A549 (cell line): ENCODE measurements at regions of chr3 and their contacts with region 1.

Region 1: GRCh38 chr3:39154280-39155021 is 1.1 kb upstream of the CSRNP1 start:
- DNase-seq: peak; percentile 87 to 91
- ATAC-seq: peak; percentile 48 to 74
- H3K4me3 ChIP-seq: peak overlapping the region; percentile 95
- H3K27ac ChIP-seq: peak overlapping the region; percentile 94 to 96
- H3K4me1 ChIP-seq: peaks cover 31% of the 10 kb centered on the region
- CTCF ChIP-seq: no peak
- EP300 ChIP-seq: no peak
- POLR2A ChIP-seq: peak; percentile 67
- RAD21 ChIP-seq: no peak

Region 2: DNA sequence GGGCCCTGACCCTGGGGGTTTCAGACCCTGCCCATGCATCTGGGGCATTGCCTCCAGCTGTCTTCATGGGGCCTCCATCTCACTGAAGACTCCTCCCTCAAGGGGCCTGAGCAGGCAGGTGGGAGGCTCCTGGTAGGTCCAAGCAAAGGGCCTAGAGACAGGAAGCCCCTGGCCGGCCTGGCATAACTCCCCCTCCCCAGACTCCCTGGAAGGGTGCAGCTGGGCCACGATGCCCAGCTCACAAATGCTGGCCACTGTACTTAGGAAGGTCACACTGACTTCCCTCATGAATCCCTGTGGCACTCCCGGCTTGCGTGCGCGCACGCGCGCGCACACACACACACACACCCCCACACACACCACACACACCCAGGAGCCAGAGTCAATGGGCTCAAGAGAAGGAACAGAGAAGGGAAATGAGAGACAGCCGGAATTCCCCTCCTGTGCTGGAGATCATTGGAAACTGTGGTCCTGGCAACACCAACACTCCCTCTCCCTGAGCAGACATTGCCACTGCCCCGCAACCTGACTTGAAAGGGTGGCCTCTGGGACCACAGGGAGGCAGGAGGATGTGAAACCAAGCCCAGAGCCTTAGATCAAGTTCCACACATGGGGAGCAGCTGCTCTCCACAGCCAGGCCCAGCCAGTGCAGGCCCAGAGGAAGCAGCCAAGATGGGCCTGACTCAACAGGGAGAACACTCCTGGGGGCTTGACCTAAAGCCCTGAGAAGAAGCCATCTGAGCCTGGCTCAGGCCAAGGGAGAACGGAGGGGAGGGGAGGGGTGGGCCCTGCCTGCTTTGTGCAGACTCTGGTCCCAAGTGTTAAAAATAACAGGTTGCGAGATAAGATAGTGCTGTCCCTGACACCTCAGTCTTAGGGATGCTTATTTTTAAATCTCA is 574.7 kb before region 1 on chr3:
- CTCF ChIA-PET with region 1: no interaction called
- POLR2A ChIA-PET with region 1: no interaction called
- DNase-seq: no peak
- ATAC-seq: no peak
- H3K4me3 ChIP-seq: no peak overlapping the region
- H3K27ac ChIP-seq: no peak overlapping the region
- H3K4me1 ChIP-seq: no peaks in the 10 kb centered on the region
- CTCF ChIP-seq: no peak
- EP300 ChIP-seq: no peak
- POLR2A ChIP-seq: no peak
- RAD21 ChIP-seq: no peak

Region 3: GRCh38 chr3:39180546-39181346 is 26.3 kb after region 1 on chr3:
- CTCF ChIA-PET with region 1: interaction called, 3 read pairs
- POLR2A ChIA-PET with region 1: interaction called, 11 read pairs
- DNase-seq: peak; percentile 76
- ATAC-seq: peak; percentile 77 to 86
- H3K4me3 ChIP-seq: peak overlapping the region; percentile 42
- H3K27ac ChIP-seq: peak overlapping the region; percentile 71 to 74
- H3K4me1 ChIP-seq: peaks cover 29% of the 10 kb centered on the region
- CTCF ChIP-seq: no peak
- EP300 ChIP-seq: no peak
- POLR2A ChIP-seq: no peak
- RAD21 ChIP-seq: 0 out of 5 replicates have a peak, but pooled peaks of 1 of the 2 experiments have one; percentile 7

Region 4: DNA sequence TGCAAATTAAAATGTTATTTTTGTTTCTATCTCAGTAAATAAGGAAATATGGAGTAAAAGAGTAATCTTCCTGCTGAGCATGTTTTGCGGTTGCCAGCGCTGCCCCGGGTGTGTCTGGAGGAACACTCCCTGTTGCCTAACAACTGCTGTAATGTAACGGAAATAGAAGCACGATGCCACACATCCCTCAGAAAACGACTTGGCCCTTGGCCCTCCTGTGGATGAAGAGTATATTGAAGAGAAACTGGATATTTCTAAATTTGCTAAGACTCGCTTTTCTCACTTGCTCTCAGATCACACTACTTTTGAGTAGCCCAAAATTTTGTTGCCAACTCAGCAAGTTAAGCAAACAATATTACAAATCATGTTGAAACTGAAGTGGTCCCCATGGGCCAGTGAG is 106.5 kb after region 1 on chr3:
- CTCF ChIA-PET with region 1: no interaction called
- POLR2A ChIA-PET with region 1: no interaction called
- DNase-seq: peak; percentile 75 to 89
- ATAC-seq: peak; percentile 94 to 96
- H3K4me3 ChIP-seq: no peak overlapping the region
- H3K27ac ChIP-seq: no peak overlapping the region
- H3K4me1 ChIP-seq: peaks cover 10% of the 10 kb centered on the region; the same call in 2 of the 3 replicates
- CTCF ChIP-seq: peak; percentile 35; the same call in 1 of the 3 replicates
- EP300 ChIP-seq: no peak
- POLR2A ChIP-seq: no peak
- RAD21 ChIP-seq: peak; percentile 19 to 40; a peak in 2 of 5 replicates